SK-N-SH (cell line): ENCODE measurements at regions of chr2 and their contacts with region 1.

Region 1: GRCh38 chr2:237122214-237122666 is 36.6 kb downstream of the COPS8 start:
- DNase-seq: peak; percentile 68
- H3K4me3 ChIP-seq: no peak overlapping the region
- H3K27ac ChIP-seq: no peak overlapping the region
- H3K4me1 ChIP-seq: peaks cover 3 to 5% of the 10 kb centered on the region in 2 experiments; a peak in 3 of 4 replicates
- H3K27me3 ChIP-seq: no peaks in the 10 kb centered on the region
- CTCF ChIP-seq: peak; percentile 60
- EP300 ChIP-seq: no peak
- RAD21 ChIP-seq: peak; percentile 81

Region 2: GRCh38 chr2:237075749-237076599 is 46.3 kb before region 1 on chr2:
- CTCF ChIA-PET with region 1: no interaction called
- POLR2A ChIA-PET with region 1: no interaction called
- DNase-seq: no peak
- H3K4me3 ChIP-seq: no peak overlapping the region
- H3K27ac ChIP-seq: no peak overlapping the region
- H3K4me1 ChIP-seq: no peaks in the 10 kb centered on the region; a peak in 1 of 4 replicates
- H3K27me3 ChIP-seq: no peaks in the 10 kb centered on the region
- CTCF ChIP-seq: no peak
- EP300 ChIP-seq: no peak
- RAD21 ChIP-seq: no peak

Region 3: DNA sequence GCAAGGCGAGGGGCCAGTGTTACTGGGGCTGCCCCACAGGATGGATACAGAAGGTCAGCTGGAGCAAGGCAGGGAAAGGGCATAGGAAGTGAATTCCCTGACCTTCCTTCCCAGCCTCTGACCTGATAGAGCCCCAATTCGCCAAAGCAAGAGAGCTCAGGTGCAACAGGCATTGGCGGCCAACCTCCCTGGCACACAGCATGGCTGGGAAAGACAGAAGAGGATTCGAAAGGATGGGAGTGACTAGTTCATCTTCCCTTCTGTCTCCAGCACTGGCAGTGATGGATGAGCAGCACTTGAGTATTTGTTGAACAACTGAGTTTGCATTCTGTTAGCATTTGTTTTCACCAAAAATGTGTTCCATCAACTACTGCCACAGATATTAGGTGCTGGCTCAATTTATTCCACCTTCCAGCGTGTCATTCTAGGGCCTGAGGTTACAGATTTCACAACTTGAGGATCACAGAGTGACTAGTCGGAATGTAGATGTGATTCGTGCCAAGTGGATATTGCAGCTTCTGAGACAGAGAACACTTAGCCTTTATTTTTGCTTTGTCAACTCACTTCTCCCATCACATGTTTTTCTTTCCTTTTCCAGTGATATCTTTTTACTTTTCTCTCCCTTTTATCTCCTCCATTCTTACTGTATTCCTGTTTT is 30.3 kb before region 1 on chr2:
- CTCF ChIA-PET with region 1: no interaction called
- POLR2A ChIA-PET with region 1: no interaction called
- DNase-seq: no peak
- H3K4me3 ChIP-seq: no peak overlapping the region
- H3K27ac ChIP-seq: peak overlapping the region in 1 of 2 experiments; percentile 45; a peak in 2 of 4 replicates
- H3K4me1 ChIP-seq: peaks cover 3% of the 10 kb centered on the region in 2 experiments; a peak in 2 of 4 replicates
- H3K27me3 ChIP-seq: no peaks in the 10 kb centered on the region
- CTCF ChIP-seq: no peak
- EP300 ChIP-seq: no peak
- RAD21 ChIP-seq: no peak

Region 4: DNA sequence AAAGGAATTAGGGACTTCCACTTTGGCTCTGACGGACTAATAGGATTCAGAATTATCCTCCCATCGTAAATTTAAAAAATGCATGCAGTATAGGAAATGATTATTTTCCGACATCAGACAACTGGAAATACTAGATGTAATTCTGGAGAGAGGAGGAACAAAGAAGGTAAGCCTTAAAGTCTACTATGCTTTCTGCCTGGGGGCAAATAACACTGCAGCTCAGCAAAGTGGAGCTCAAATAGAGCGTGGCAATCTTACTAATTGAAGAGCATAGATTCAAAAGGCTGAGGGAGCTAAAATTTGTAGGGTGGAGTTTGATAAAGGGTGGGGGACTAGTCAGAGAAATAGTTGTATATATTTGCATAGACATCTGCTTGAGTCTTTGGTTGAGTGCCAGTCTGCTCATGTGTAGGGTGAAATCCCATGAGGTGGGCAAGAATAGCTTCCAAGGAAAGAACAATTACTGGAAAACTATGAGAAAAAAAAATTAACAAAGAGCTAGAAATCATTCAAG is 12.8 kb before region 1 on chr2:
- CTCF ChIA-PET with region 1: interaction called, 13 read pairs
- POLR2A ChIA-PET with region 1: no interaction called
- DNase-seq: no peak
- H3K4me3 ChIP-seq: no peak overlapping the region
- H3K27ac ChIP-seq: no peak overlapping the region
- H3K4me1 ChIP-seq: no peaks in the 10 kb centered on the region
- H3K27me3 ChIP-seq: no peaks in the 10 kb centered on the region
- CTCF ChIP-seq: no peak
- EP300 ChIP-seq: no peak
- RAD21 ChIP-seq: no peak

Region 5: DNA sequence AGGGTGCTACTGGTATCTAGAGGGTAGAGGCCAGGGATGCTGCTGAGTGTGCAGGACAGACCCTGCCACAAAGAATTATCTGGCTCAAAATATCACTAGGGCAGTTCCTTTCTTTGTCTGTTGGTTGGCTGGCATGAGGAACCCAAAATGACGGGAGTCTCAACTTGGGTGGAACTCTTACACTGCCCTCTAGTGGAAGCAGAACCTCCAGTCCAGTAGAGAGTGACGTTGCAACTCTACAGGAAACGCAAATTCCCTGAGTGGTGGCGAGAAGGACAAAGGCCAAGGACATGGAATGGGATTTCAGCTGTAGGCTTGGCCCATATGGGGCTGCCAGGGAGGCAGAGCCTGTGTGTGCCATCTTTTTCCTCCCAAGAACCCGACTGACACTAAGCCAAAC is 10.6 kb after region 1 on chr2:
- CTCF ChIA-PET with region 1: interaction called, 26 read pairs
- POLR2A ChIA-PET with region 1: no interaction called
- DNase-seq: peak; percentile 31
- H3K4me3 ChIP-seq: no peak overlapping the region
- H3K27ac ChIP-seq: no peak overlapping the region
- H3K4me1 ChIP-seq: peaks cover 0 to 8% of the 10 kb centered on the region in 2 experiments; a peak in 3 of 4 replicates
- H3K27me3 ChIP-seq: no peaks in the 10 kb centered on the region
- CTCF ChIP-seq: peak; percentile 43
- EP300 ChIP-seq: no peak
- RAD21 ChIP-seq: no peak

Region 6: GRCh38 chr2:237181844-237182243 is 59.6 kb after region 1 on chr2:
- CTCF ChIA-PET with region 1: no interaction called
- POLR2A ChIA-PET with region 1: no interaction called
- DNase-seq: no peak
- H3K4me3 ChIP-seq: no peak overlapping the region
- H3K27ac ChIP-seq: peak overlapping the region in 1 of 2 experiments; percentile 87; a peak in 2 of 4 replicates
- H3K4me1 ChIP-seq: 0 out of 4 replicates have a peak, but pooled peaks cover 0 to 2% of the 10 kb centered on the region in 2 experiments
- H3K27me3 ChIP-seq: no peaks in the 10 kb centered on the region
- CTCF ChIP-seq: no peak
- EP300 ChIP-seq: no peak
- RAD21 ChIP-seq: no peak

Region 7: GRCh38 chr2:237662671-237663093 is 540.4 kb after region 1 on chr2:
- CTCF ChIA-PET with region 1: no interaction called
- POLR2A ChIA-PET with region 1: no interaction called
- DNase-seq: peak; percentile 63
- H3K4me3 ChIP-seq: no peak overlapping the region
- H3K27ac ChIP-seq: peak overlapping the region in 1 of 2 experiments; percentile 21; a peak in 1 of 4 replicates
- H3K4me1 ChIP-seq: peaks cover 8 to 21% of the 10 kb centered on the region in 2 experiments; a peak in 2 of 4 replicates
- H3K27me3 ChIP-seq: no peaks in the 10 kb centered on the region
- CTCF ChIP-seq: no peak
- EP300 ChIP-seq: no peak
- RAD21 ChIP-seq: no peak